SK-N-SH (cell line): ENCODE measurements at regions of chr7 and their contacts with region 1.

Region 1: GRCh38 chr7:87152107-87152844 is at the start of gene DMTF1:
- DNase-seq: peak; percentile 98
- H3K4me3 ChIP-seq: peak within 1 kb of the TSS; percentile 73 to 92
- H3K27ac ChIP-seq: peak within 1 kb of the TSS; percentile 96 to 99
- H3K4me1 ChIP-seq: peaks cover 19 to 38% of the 10 kb centered on the region in 2 experiments; a peak in 3 of 4 replicates
- H3K27me3 ChIP-seq: no peaks in the 10 kb centered on the region
- CTCF ChIP-seq: no peak
- EP300 ChIP-seq: peak; percentile 31 to 55; a peak in 3 of 4 replicates
- RAD21 ChIP-seq: no peak
- polyA plus RNA-seq, gene DMTF1: 108 and 177 TPM in 2 replicates

Region 2: DNA sequence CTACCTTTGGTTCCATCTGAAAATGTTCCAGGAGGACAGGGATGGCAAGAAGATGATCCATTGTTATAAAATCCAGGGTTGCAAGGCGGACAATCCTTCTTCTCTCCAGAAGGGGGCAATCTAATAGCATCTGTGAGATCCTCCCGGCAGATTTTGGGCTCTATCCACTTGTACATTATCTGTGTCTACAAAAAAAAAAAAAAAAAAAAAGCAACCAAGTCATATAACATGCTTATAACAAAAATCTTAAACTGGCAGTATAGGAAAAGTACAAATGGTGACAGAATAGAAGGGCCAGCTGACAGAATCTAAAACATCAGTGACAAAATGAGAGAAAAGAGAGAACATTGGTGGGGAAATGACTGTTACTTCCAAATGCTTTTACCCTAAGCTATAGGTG is 225.5 kb before region 1 on chr7:
- CTCF ChIA-PET with region 1: interaction called, 295 read pairs
- POLR2A ChIA-PET with region 1: interaction called, 5 read pairs
- DNase-seq: peak; percentile 53
- H3K4me3 ChIP-seq: no peak overlapping the region; a peak in 1 of 4 replicates
- H3K27ac ChIP-seq: no peak overlapping the region
- H3K4me1 ChIP-seq: peaks cover 3 to 5% of the 10 kb centered on the region in 2 experiments; a peak in 3 of 4 replicates
- H3K27me3 ChIP-seq: no peaks in the 10 kb centered on the region
- CTCF ChIP-seq: peak; percentile 96
- EP300 ChIP-seq: no peak
- RAD21 ChIP-seq: peak; percentile 92

Region 3: GRCh38 chr7:87013836-87014182 is 138.5 kb before region 1 on chr7:
- CTCF ChIA-PET with region 1: interaction called, 12 read pairs
- POLR2A ChIA-PET with region 1: no interaction called
- DNase-seq: no peak
- H3K4me3 ChIP-seq: no peak overlapping the region
- H3K27ac ChIP-seq: no peak overlapping the region
- H3K4me1 ChIP-seq: no peaks in the 10 kb centered on the region; a peak in 2 of 4 replicates
- H3K27me3 ChIP-seq: no peaks in the 10 kb centered on the region
- CTCF ChIP-seq: no peak
- EP300 ChIP-seq: no peak
- RAD21 ChIP-seq: no peak

Region 4: GRCh38 chr7:87129848-87130247 is 22.4 kb before region 1 on chr7:
- CTCF ChIA-PET with region 1: interaction called, 11 read pairs
- POLR2A ChIA-PET with region 1: interaction called, 3 read pairs
- DNase-seq: no peak
- H3K4me3 ChIP-seq: no peak overlapping the region
- H3K27ac ChIP-seq: no peak overlapping the region
- H3K4me1 ChIP-seq: no peaks in the 10 kb centered on the region
- H3K27me3 ChIP-seq: no peaks in the 10 kb centered on the region; the same call in 1 of the 2 replicates
- CTCF ChIP-seq: no peak
- EP300 ChIP-seq: no peak
- RAD21 ChIP-seq: no peak

Region 5: DNA sequence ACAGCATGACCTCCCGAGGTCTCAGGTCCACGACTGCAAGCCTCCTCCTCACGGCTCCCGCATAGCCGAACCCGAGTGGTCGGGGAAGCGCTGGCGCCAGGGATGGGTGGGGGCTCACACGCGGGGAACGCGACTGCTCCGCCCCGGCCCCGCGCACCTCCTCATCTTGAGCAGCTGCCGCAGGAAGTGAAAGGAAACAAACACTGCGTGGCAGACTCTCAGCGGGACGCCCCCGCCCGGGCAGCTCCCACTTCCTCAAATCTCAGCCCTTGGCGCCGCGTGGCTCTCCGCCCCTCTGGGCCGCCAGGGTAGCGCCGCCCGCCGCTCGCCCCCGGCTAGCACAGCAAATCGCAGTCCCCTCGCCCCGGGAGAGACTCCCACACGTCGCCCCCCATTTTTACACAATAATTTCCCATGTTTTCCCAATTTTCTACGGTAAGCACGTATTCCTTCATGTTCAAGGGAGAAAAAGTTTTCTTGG is 67.3 kb after region 1 on chr7 and contains the start of gene TMEM243:
- CTCF ChIA-PET with region 1: interaction called, 13 read pairs
- POLR2A ChIA-PET with region 1: interaction called, 22 read pairs
- DNase-seq: peak; percentile 88
- H3K4me3 ChIP-seq: peak within 1 kb of the TSS; percentile 95 to 99
- H3K27ac ChIP-seq: peak within 1 kb of the TSS; percentile 61 to 74
- H3K4me1 ChIP-seq: peaks cover 0 to 24% of the 10 kb centered on the region in 2 experiments; a peak in 2 of 4 replicates
- H3K27me3 ChIP-seq: no peaks in the 10 kb centered on the region
- CTCF ChIP-seq: peak; percentile 40
- EP300 ChIP-seq: 0 out of 4 replicates have a peak, but pooled peaks of 1 of the 2 experiments have one; percentile 6
- RAD21 ChIP-seq: no peak
- polyA plus RNA-seq, gene TMEM243: 31.1 and 36.5 TPM in 2 replicates